ENCODE measurements at regions of chr18 and their contacts with region 1.

Region 1: GRCh38 chr18:54224379-54225014 is at the start of gene MBD2:
- DNase-seq: peak; percentile 94
- H3K4me3 ChIP-seq: peak within 1 kb of the TSS; percentile 47 to 82 (median 77)
- H3K27ac ChIP-seq: peak within 1 kb of the TSS; percentile 92
- H3K4me1 ChIP-seq: peaks cover 20% of the 10 kb centered on the region
- H3K27me3 ChIP-seq: no peaks in the 10 kb centered on the region
- CTCF ChIP-seq: peak in 1 of 2 donors; percentile 41
- total RNA-seq, gene MBD2: 31.3 to 136 TPM

Region 2: DNA sequence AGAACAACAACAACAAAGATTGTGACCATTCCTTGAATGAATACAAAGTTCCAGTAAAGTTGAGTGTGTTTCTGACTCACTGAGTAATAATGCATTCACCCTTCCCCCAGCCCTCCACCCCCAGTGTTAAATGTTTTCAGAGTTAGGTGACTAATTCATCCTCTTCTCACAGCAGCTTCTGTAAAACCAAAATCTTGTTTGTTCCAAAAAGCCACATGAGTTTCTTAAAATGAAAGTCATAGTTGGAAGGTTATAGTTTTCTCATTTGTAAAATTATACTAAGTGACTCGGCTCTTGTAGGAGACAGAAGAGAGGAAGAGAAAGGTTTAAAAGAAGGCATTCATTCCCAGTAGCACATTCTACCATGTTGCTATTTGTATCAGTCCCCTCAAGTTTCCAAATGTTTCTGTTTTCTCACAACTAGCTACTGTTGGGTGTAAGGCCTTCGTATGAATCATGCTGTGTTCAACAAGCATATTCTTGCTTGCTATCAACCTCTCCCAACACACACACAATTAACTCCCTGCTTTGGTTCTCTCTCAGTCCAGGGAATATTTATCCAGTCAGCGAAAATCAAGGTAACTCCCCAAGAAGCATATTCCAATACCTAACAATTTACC is 75.3 kb before region 1 on chr18:
- CTCF ChIA-PET with region 1: no interaction called
- dilution Hi-C with region 1: no loop called
- in situ Hi-C with region 1: no loop called
- intact Hi-C with region 1: loop called (anchors 5 kb)
- DNase-seq: peak; percentile 89
- H3K4me3 ChIP-seq: peak overlapping the region in 2 of 3 experiments; percentile 12 to 28
- H3K27ac ChIP-seq: peak overlapping the region; percentile 90
- H3K4me1 ChIP-seq: peaks cover 52% of the 10 kb centered on the region
- H3K27me3 ChIP-seq: no peaks in the 10 kb centered on the region
- CTCF ChIP-seq: no peak

Region 3: GRCh38 chr18:54247511-54248175 is 23.1 kb after region 1 on chr18:
- CTCF ChIA-PET with region 1: no interaction called
- dilution Hi-C with region 1: no loop called
- in situ Hi-C with region 1: no loop called
- intact Hi-C with region 1: loop called (anchors 1 kb)
- DNase-seq: peak; percentile 29
- H3K4me3 ChIP-seq: no peak overlapping the region
- H3K27ac ChIP-seq: peak overlapping the region; percentile 84
- H3K4me1 ChIP-seq: peaks cover 20% of the 10 kb centered on the region
- H3K27me3 ChIP-seq: no peaks in the 10 kb centered on the region
- CTCF ChIP-seq: no peak

Region 4: GRCh38 chr18:54269893-54270844 is 45.7 kb after region 1 on chr18:
- CTCF ChIA-PET with region 1: interaction called, 11 read pairs
- dilution Hi-C with region 1: no loop called
- in situ Hi-C with region 1: loop called in 1 of 2 experiments (anchors 10 kb)
- intact Hi-C with region 1: loop called (anchors 1 kb)
- DNase-seq: peak; percentile 71
- H3K4me3 ChIP-seq: peak overlapping the region; percentile 50 to 61 (median 52)
- H3K27ac ChIP-seq: peak overlapping the region; percentile 90
- H3K4me1 ChIP-seq: peaks cover 10% of the 10 kb centered on the region
- H3K27me3 ChIP-seq: no peaks in the 10 kb centered on the region
- CTCF ChIP-seq: peak; percentile 37 to 66

Region 5: DNA sequence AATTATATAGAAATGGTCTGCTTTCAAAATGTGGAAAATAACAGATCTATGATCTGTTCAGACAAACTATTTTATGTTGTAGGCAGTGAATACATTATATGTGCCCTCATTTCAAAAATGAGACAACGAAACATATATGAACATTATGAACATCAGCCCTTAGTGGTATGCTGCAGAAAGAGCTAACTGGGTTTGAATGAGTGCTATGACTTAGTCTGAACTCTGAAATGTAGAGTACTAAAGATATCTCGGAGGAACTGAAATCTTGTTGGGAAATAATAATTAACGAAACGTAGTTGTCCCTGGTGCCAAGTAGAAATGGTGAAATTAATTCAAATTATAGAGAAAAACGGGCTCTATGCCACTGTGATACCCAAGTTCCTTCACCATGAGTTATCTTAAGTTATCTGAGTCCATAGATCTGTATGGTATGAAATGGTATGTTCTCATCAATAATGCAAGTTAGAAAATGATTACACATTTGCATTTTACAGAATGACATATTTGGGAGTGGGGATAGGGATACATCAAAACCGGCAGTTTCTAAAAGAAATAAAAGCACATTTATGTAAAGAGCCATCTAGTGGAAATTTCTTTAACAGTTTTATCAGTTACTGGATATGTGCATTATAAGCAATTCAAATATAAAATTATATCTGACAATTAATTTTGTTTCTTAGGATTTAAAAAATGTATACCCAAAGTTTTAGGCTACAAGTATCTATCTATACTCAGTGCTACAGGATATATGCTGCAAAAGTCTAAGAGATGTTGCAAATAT is 106.5 kb after region 1 on chr18:
- CTCF ChIA-PET with region 1: no interaction called
- dilution Hi-C with region 1: no loop called
- in situ Hi-C with region 1: no loop called
- intact Hi-C with region 1: loop called (anchors 2 kb)
- DNase-seq: no peak
- H3K4me3 ChIP-seq: no peak overlapping the region
- H3K27ac ChIP-seq: no peak overlapping the region
- H3K4me1 ChIP-seq: no peaks in the 10 kb centered on the region
- H3K27me3 ChIP-seq: no peaks in the 10 kb centered on the region
- CTCF ChIP-seq: peak; percentile 4 to 11

Region 6: DNA sequence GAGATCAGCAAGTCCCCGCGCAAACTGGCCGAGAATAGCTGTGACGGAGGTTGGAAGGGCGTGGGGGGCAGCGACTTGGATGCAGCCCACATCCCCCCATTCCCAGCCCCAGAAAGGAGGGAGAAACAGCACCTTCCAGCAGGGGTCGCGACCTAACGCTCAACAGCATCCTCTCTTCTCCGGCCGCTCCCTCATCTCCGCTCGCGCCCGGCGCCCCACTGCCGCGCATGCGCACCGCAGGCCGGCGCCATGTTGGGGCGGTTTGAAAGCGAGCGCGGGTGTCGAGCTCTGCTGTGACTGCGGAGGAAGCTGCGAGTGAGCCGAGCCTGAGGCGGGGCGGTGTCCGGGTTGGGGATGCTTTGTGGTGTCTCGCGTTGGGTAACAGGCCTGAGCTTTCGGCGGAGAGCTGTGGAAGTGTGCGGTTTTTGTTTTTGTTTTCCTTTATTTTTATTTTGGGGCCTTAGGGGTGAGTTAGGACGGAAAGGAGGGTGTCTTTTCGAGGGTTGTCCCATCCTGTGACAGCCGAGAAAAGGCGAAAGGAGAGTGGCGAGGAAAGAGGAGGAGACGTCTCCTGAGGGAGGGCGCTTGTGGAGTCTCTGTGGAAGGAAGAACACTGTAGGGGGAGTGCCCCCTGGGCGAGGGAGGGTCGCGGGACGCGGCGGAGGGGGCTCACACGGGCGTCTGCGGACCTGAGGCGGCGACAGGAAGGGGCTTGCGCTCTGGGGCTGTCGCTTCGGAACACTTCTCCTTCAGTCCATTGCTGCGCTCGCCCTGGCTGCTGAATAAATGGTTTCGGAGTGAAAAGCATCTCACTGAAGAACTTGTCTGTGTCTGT is 133.4 kb after region 1 on chr18 and contains the starts of genes C18orf54 and STARD6:
- CTCF ChIA-PET with region 1: interaction called, 3 read pairs
- dilution Hi-C with region 1: no loop called
- in situ Hi-C with region 1: no loop called
- intact Hi-C with region 1: loop called (anchors 1 kb)
- DNase-seq: peak; percentile 88
- H3K4me3 ChIP-seq: peak within 1 kb of the TSS; percentile 86 to 94 (median 89)
- H3K27ac ChIP-seq: peak within 1 kb of the TSS; percentile 70
- H3K4me1 ChIP-seq: peaks cover 8% of the 10 kb centered on the region
- H3K27me3 ChIP-seq: no peaks in the 10 kb centered on the region
- CTCF ChIP-seq: peak; percentile 16 to 53
- total RNA-seq, gene C18orf54: 2.3 to 12.0 TPM
- total RNA-seq, gene STARD6: 0.49 TPM in 1 of 2 donors, not detected in the other

Region 7: GRCh38 chr18:54392543-54393023 is 168.1 kb after region 1 on chr18:
- CTCF ChIA-PET with region 1: no interaction called
- dilution Hi-C with region 1: no loop called
- in situ Hi-C with region 1: no loop called
- intact Hi-C with region 1: loop called (anchors 2 kb)
- DNase-seq: peak; percentile 44
- H3K4me3 ChIP-seq: no peak overlapping the region
- H3K27ac ChIP-seq: no peak overlapping the region
- H3K4me1 ChIP-seq: peaks cover 16% of the 10 kb centered on the region
- H3K27me3 ChIP-seq: peaks cover 2% of the 10 kb centered on the region
- CTCF ChIP-seq: peak; percentile 68 to 72